Ascending aorta (tissue), 2 donors: ENCODE measurements at regions of chr1 and their contacts with region 1.

Region 1: GRCh38 chr1:19209990-19210771 is at the start of gene UBR4:
- DNase-seq: peak; percentile 57 to 96
- H3K4me3 ChIP-seq: peak within 1 kb of the TSS; percentile 67 to 75
- H3K27ac ChIP-seq: peak within 1 kb of the TSS; percentile 90 to 95
- H3K4me1 ChIP-seq: peaks cover 6 to 29% of the 10 kb centered on the region in 2 donors
- H3K27me3 ChIP-seq: no peaks in the 10 kb centered on the region
- CTCF ChIP-seq: peak in 1 of 3 experiments; percentile 8
- total RNA-seq, gene UBR4: 222 TPM

Region 2: DNA sequence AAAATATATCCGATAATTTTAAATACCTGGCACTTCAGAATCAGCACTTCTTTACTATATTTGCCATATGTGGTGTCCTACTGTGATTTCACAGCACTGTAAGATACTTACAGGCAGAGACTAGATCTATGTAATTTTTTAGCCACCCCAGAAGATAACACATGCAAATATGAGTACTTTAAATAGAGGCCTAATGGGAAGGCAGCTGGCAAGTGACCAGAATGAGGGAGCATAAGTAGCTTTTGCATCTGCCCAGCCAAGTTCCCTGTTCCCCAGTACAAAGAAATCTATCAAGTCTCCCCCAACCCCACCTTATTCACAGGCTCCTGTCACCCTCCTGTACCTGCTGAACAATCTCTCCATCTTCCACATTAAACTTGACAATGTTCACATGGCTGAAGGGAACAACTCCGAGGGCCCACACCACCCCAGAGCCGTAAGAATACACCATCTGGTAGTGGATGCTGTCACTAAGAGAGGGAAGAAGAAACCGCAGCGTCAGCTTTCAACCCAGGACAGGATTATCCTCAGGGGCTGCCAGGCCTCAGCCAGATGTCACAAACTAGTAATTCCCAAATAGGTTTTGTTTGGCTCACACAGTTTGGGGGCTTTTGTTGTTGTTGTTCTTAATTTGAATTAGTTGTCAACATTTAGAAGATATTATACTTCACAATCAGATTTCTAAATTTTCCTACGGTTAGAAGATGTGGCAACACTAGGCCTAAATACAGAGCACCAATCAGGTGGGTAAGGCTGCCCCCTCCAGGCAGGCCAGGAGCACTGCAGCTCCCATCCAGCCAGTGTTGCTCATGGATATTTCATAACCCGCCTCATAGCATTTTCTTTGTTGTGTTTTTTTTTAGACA is 30.7 kb after region 1 on chr1:
- intact Hi-C with region 1: loop called (anchors 5 kb)
- DNase-seq: peak in 1 of 2 donors; percentile 80
- H3K4me3 ChIP-seq: no peak overlapping the region
- H3K27ac ChIP-seq: no peak overlapping the region
- H3K4me1 ChIP-seq: no peaks in the 10 kb centered on the region
- H3K27me3 ChIP-seq: no peaks in the 10 kb centered on the region
- CTCF ChIP-seq: peak; percentile 73 to 97 (median 95)